ENCODE measurements at regions of chr10 and their contacts with region 1.

Region 1: GRCh38 chr10:101141616-101142532 is 10.8 kb downstream of the TLX1 start:
- DNase-seq: peak; percentile 91
- CTCF ChIP-seq: peak; percentile 96

Region 2: DNA sequence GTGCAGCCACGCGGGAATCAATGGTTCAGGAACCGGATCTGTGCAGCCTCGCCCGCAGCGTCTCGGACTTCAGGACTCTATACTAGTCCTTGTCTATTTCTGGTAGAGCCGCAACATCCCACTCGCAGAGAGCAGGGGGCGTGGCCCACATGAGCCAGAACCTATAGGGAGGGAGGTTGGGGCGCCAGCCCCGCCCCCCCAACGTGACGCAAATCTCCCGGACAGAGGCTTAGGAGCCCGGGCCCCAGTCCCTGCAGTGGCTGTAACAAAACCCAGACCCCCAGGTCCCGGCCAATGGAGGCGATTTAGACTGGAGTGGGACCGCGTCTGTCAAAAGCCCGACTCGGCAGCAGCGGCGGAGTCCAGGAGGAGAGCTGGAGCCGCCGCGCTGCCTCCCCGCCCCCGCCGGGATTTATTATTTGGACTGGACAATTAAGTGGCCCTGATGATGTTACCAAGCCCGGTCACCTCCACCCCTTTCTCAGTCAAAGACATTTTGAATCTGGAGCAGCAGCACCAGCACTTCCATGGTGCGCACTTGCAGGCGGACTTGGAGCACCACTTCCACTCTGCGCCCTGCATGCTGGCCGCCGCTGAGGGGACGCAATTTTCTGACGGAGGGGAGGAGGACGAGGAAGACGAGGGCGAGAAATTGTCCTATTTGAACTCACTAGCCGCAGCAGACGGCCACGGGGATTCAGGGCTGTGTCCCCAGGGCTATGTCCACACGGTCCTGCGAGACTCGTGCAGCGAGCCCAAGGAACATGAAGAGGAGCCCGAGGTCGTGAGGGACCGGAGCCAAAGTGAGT is 1609.0 kb before region 1 on chr10 and contains the start of gene NKX2-3:
- in situ Hi-C with region 1: loop called (anchors 25 kb)
- DNase-seq: peak; percentile 71
- CTCF ChIP-seq: no peak

Region 3: DNA sequence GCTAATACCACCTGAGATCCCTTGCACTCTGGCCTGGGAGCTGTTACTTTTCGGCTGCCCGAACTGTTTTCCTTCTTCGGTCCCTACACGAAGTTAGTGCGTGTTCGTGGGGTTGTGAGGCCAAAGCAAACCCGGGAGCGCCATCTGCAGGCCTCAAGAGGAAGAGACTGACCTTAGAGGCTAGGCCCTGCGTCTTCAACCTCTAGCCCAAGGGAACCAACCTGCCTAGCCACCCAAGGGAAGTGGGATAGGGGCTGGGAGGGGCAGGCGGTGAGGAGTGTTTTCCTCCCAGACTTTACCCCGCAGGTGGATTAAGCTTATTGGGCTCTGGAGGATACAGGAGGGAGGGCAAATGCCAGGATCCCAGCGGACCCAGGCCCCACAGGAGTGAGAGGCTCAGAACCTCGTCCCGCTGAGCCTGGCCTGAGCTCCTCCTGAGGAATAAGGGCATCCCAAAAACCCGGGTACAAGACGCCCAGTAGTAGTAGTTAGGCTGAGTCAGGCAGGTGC is 398.2 kb before region 1 on chr10:
- in situ Hi-C with region 1: loop called (anchors 25 kb)
- DNase-seq: peak; percentile 89
- CTCF ChIP-seq: peak; percentile 74

Region 4: DNA sequence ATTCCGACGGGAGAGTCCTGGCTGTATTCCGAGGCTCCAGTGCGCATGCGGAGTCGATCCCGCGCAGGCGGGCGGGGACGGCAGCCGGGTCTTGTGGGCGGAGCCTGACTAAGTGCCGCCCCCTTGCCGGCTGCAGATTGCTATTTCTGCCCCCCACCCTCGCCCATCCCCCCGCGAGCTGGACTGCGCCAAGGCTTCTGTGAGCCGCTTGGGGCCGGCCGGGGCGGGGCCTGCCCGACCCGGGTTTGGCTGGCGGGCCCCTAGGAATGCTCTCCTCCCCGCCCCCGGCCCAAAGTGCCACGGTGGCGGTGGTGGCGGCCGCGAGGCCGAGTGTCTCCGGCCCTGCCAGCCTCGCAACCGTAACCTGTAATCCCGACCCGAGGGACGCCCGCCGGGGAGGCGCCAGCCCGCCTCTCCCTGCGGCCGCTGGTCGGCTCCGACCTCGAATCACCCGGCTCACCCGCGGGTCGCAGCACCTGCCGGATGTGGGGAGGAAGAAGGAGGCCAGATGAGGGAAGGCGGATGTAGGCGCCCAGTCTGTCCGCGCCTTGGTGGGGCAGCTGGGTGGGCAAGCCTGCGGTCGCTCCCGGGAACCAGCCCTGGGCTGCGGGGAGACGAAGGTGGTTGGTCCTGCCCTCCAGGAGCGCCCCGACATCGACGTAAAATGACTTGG is 80.8 kb before region 1 on chr10:
- in situ Hi-C with region 1: no loop called
- DNase-seq: peak; percentile 98
- CTCF ChIP-seq: no peak